ENCODE measurements at regions of chr9 and their contacts with region 1.

Region 1: GRCh38 chr9:35945341-35946018 is 12.5 kb downstream of the OR2S2 start:
- DNase-seq: peak; percentile 67
- H3K4me3 ChIP-seq: peak overlapping the region in 1 of 3 experiments; percentile 33
- H3K27ac ChIP-seq: peak overlapping the region; percentile 16
- H3K4me1 ChIP-seq: peaks cover 22% of the 10 kb centered on the region
- H3K27me3 ChIP-seq: no peaks in the 10 kb centered on the region
- CTCF ChIP-seq: peak; percentile 83 to 85
- POLR2A ChIP-seq: no peak

Region 2: GRCh38 chr9:35774907-35775635 is 170.4 kb before region 1 on chr9:
- CTCF ChIA-PET with region 1: no interaction called
- POLR2A ChIA-PET with region 1: no interaction called
- dilution Hi-C with region 1: no loop called
- intact Hi-C with region 1: no loop called
- DNase-seq: peak; percentile 79
- H3K4me3 ChIP-seq: peak overlapping the region in 1 of 3 experiments; percentile 13
- H3K27ac ChIP-seq: peak overlapping the region; percentile 52
- H3K4me1 ChIP-seq: peaks cover 36% of the 10 kb centered on the region
- H3K27me3 ChIP-seq: no peaks in the 10 kb centered on the region
- CTCF ChIP-seq: no peak
- POLR2A ChIP-seq: no peak

Region 3: DNA sequence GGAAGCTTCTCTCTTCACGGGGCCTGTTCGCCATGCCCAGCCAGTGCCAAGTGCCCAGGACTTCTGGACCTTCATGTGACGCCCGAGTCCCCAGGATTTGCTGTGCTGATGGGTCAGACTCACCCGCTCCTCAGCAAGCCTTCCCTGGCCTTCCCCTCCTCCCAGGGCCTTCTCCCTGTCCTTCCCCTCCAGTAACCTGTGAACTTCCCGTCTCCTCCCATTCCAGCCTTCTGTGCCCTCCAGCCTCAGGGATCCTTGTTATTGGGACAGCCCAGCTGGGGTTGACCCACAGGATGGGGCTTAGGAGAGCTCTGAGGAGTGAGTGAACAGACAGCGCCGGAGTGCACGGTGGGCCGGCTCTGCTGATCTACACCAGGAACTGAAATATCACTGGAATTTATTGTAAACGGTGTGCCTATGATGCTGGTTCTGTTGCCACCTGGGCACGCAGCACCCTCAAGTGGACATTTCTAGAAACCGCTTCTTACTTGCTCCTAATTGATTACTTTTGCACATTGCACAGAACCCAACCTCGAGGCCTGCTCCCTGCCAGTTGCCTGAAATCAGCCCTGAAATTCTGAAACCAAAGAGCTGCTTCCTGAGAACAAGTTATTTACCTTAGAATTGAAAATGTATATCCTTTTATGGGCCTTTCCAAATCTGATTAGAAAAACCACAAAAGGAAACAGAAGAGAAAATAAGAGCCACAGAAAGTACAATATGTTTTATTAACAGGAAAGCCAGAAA is 34.7 kb before region 1 on chr9:
- CTCF ChIA-PET with region 1: interaction called, 103 read pairs
- POLR2A ChIA-PET with region 1: interaction called, 6 read pairs
- dilution Hi-C with region 1: no loop called
- intact Hi-C with region 1: loop called (anchors 1 kb)
- DNase-seq: peak; percentile 86
- H3K4me3 ChIP-seq: peak overlapping the region in 2 of 3 experiments; percentile 4 to 53
- H3K27ac ChIP-seq: peak overlapping the region; percentile 94
- H3K4me1 ChIP-seq: peaks cover 68% of the 10 kb centered on the region
- H3K27me3 ChIP-seq: no peaks in the 10 kb centered on the region
- CTCF ChIP-seq: peak; percentile 60 to 65
- POLR2A ChIP-seq: peak; percentile 61

Region 4: DNA sequence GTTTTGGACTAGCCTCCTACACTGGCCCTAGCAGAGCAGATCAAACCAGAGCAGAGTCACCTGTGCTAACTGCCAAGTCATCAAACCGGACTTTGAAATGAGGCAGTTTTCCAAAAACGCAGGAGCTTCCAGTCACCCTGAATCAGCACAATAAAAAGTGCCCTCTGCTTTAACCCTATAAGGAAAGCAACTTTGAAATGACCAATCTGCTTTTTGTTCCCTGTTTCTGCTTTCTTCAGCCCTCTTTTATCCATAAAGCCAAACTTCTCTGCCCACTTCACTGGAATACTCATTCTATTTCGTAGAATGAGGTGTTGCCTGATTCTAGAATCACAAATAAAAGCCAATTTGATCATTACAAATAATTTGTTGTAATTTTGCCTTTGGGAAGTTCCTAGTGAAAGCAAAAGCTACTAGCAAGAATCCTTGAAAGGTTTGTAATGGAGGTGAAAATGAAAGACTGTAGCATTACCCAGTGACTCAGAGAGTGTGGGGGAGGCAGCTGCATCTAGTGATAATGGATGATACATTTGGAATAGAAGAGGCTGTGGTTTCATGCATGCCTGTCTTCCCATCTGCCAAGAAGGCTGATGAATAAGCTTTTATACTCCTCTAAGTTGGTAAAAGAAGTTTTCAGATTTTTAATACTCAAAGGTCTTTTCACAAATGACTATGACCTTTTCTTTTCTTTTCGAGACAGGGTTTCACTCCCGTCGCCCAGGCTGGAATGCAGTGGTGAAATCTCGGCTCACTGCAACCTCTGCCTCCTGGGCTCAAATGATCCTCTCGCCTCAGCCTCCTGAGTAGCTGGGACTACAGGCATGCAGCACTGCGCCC is 21.3 kb before region 1 on chr9:
- CTCF ChIA-PET with region 1: interaction called, 19 read pairs
- POLR2A ChIA-PET with region 1: interaction called, 8 read pairs
- dilution Hi-C with region 1: no loop called
- intact Hi-C with region 1: loop called (anchors 2 kb)
- DNase-seq: no peak
- H3K4me3 ChIP-seq: no peak overlapping the region
- H3K27ac ChIP-seq: no peak overlapping the region
- H3K4me1 ChIP-seq: peaks cover 12% of the 10 kb centered on the region
- H3K27me3 ChIP-seq: no peaks in the 10 kb centered on the region
- CTCF ChIP-seq: no peak
- POLR2A ChIP-seq: no peak

Region 5: GRCh38 chr9:35960039-35960655 is 14.7 kb after region 1 on chr9:
- CTCF ChIA-PET with region 1: interaction called, 20 read pairs
- POLR2A ChIA-PET with region 1: no interaction called
- dilution Hi-C with region 1: no loop called
- intact Hi-C with region 1: no loop called
- DNase-seq: no peak
- H3K4me3 ChIP-seq: no peak overlapping the region
- H3K27ac ChIP-seq: no peak overlapping the region
- H3K4me1 ChIP-seq: no peaks in the 10 kb centered on the region
- H3K27me3 ChIP-seq: no peaks in the 10 kb centered on the region
- CTCF ChIP-seq: no peak
- POLR2A ChIP-seq: no peak

Region 6: GRCh38 chr9:35976726-35977125 is 31.2 kb after region 1 on chr9:
- CTCF ChIA-PET with region 1: no interaction called
- POLR2A ChIA-PET with region 1: no interaction called
- dilution Hi-C with region 1: no loop called
- intact Hi-C with region 1: no loop called
- DNase-seq: no peak
- H3K4me3 ChIP-seq: no peak overlapping the region
- H3K27ac ChIP-seq: no peak overlapping the region
- H3K4me1 ChIP-seq: no peaks in the 10 kb centered on the region
- H3K27me3 ChIP-seq: peaks cover under 1 to 3% of the 10 kb centered on the region in 2 experiments
- CTCF ChIP-seq: no peak
- POLR2A ChIP-seq: no peak

Region 7: GRCh38 chr9:36023260-36024048 is 78.0 kb after region 1 on chr9:
- CTCF ChIA-PET with region 1: interaction called, 11 read pairs
- POLR2A ChIA-PET with region 1: no interaction called
- dilution Hi-C with region 1: no loop called
- intact Hi-C with region 1: no loop called
- DNase-seq: peak; percentile 71
- H3K4me3 ChIP-seq: no peak overlapping the region
- H3K27ac ChIP-seq: no peak overlapping the region
- H3K4me1 ChIP-seq: no peaks in the 10 kb centered on the region
- H3K27me3 ChIP-seq: no peaks in the 10 kb centered on the region
- CTCF ChIP-seq: peak; percentile 71 to 79
- POLR2A ChIP-seq: no peak

Measured in endothelial cell of umbilical vein (primary cell).